CD4-positive, alpha-beta T cell (primary cell): ENCODE measurements at regions of chr19 and their contacts with region 1.

Region 1: GRCh38 chr19:41859618-41860418 is at the start of gene RPS19:
- DNase-seq: peak; percentile 95 to 99 (median 98)
- ATAC-seq: peak; percentile 85
- H3K4me3 ChIP-seq: peak within 1 kb of the TSS; percentile 74
- H3K4me3 Mint-ChIP-seq: peak within 1 kb of the TSS; percentile 87
- H3K27ac ChIP-seq: peak within 1 kb of the TSS; percentile 89 to 98
- H3K27ac Mint-ChIP-seq: peak within 1 kb of the TSS; percentile 86
- H3K4me1 ChIP-seq: peaks cover 49% of the 10 kb centered on the region
- H3K4me1 Mint-ChIP-seq: peaks cover 48% of the 10 kb centered on the region
- H3K27me3 ChIP-seq: no peaks in the 10 kb centered on the region
- H3K27me3 Mint-ChIP-seq: no peaks in the 10 kb centered on the region
- CTCF ChIP-seq: peak; percentile 84
- total RNA-seq, gene RPS19: 3,668 to 3,697 TPM

Region 2: DNA sequence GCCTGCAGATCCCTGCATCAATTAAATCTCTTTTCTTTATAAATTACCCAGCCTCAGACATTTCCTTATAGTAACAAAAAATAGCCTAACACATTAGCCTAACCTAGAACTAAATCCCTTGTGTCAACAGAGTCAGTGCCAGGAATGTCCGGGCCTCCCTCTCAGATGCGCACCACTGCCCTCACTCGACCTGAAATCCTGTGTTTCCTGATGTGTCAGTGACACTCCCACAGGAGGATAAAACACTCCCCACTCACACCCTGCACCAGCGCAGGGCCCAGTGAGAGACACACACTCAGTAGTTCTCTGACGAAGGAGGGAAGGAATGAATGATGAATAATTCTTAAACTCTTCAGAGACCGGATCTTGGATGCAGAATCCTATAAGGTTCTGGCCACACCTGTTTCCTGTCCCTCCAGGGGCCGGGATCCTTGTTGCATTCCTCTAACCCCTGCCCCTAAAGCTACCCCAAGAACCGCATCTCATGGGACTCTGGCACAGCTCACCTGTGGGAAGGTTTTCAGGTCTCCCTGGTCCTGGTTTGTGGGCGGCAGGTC is 60.3 kb before region 1 on chr19:
- CTCF ChIA-PET with region 1: no interaction called
- POLR2A ChIA-PET with region 1: no interaction called
- intact Hi-C with region 1: no loop called
- DNase-seq: no peak
- ATAC-seq: no peak
- H3K4me3 ChIP-seq: no peak overlapping the region
- H3K4me3 Mint-ChIP-seq: no peak overlapping the region
- H3K27ac ChIP-seq: no peak overlapping the region
- H3K27ac Mint-ChIP-seq: no peak overlapping the region
- H3K4me1 ChIP-seq: no peaks in the 10 kb centered on the region
- H3K4me1 Mint-ChIP-seq: peaks cover 14% of the 10 kb centered on the region
- H3K27me3 ChIP-seq: peaks cover 0 to 7% of the 10 kb centered on the region in 2 experiments
- H3K27me3 Mint-ChIP-seq: peaks cover 6% of the 10 kb centered on the region
- CTCF ChIP-seq: no peak

Region 3: DNA sequence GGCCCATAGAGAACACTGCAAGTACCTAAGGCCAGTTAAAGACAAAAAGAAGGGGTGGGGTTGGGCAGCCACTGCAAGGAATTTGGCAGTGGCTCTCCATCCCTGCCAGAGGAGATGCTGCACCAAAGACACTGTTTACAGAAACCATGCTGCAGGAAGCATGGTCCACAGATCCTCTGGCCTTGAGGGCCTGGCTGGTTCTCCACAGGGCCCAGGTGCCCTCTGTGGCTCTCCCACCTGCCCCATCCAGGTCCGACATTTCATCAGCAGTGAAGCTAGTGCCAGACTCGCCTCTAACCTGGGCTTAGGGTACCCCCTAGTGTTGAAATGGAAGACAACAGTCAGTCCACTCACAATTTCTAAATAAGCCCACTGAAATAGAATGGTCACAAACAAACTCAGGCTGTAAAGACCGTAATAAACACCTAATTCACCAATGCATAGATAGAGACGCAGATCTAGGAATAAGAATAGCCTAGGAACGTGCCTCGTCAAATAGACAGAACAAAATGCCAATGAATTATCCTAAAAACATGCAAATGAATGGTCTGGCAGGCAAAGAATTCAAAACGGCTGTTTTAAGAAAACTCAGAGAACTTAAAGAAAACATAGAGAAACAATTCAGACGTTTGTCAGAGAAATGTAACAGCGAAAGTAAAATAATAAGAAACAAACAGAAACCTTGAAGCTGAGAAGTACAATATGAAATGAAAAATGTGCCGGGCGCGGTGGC is 38.6 kb before region 1 on chr19:
- CTCF ChIA-PET with region 1: no interaction called
- POLR2A ChIA-PET with region 1: no interaction called
- intact Hi-C with region 1: no loop called
- DNase-seq: peak in 13 of 14 experiments; percentile 7 to 76 (median 21)
- ATAC-seq: peak; percentile 81
- H3K4me3 ChIP-seq: no peak overlapping the region
- H3K4me3 Mint-ChIP-seq: no peak overlapping the region
- H3K27ac ChIP-seq: no peak overlapping the region
- H3K27ac Mint-ChIP-seq: no peak overlapping the region
- H3K4me1 ChIP-seq: peaks cover 2% of the 10 kb centered on the region
- H3K4me1 Mint-ChIP-seq: no peaks in the 10 kb centered on the region
- H3K27me3 ChIP-seq: peaks cover 0 to 2% of the 10 kb centered on the region in 2 experiments
- H3K27me3 Mint-ChIP-seq: peaks cover 25% of the 10 kb centered on the region
- CTCF ChIP-seq: peak; percentile 66

Region 4: GRCh38 chr19:41872775-41873647 is 13.2 kb after region 1 on chr19:
- CTCF ChIA-PET with region 1: interaction called, 50 read pairs
- POLR2A ChIA-PET with region 1: interaction called, 125 read pairs
- intact Hi-C with region 1: loop called (anchors 1 kb)
- DNase-seq: peak; percentile 55 to 82 (median 66)
- ATAC-seq: no peak
- H3K4me3 ChIP-seq: no peak overlapping the region
- H3K4me3 Mint-ChIP-seq: peak overlapping the region; percentile 71
- H3K27ac ChIP-seq: peak overlapping the region; percentile 66 to 67
- H3K27ac Mint-ChIP-seq: peak overlapping the region; percentile 98
- H3K4me1 ChIP-seq: peaks cover 100% of the 10 kb centered on the region
- H3K4me1 Mint-ChIP-seq: peaks cover 80% of the 10 kb centered on the region
- H3K27me3 ChIP-seq: no peaks in the 10 kb centered on the region
- H3K27me3 Mint-ChIP-seq: no peaks in the 10 kb centered on the region
- CTCF ChIP-seq: peak; percentile 86

Region 5: GRCh38 chr19:41892173-41892902 is 32.5 kb after region 1 on chr19:
- CTCF ChIA-PET with region 1: interaction called, 59 read pairs
- POLR2A ChIA-PET with region 1: interaction called, 184 read pairs
- intact Hi-C with region 1: loop called (anchors 1 kb)
- DNase-seq: no peak
- ATAC-seq: no peak
- H3K4me3 ChIP-seq: no peak overlapping the region
- H3K4me3 Mint-ChIP-seq: no peak overlapping the region
- H3K27ac ChIP-seq: peak overlapping the region; percentile 52 to 57
- H3K27ac Mint-ChIP-seq: peak overlapping the region; percentile 98
- H3K4me1 ChIP-seq: peaks cover 94% of the 10 kb centered on the region
- H3K4me1 Mint-ChIP-seq: peaks cover 60% of the 10 kb centered on the region
- H3K27me3 ChIP-seq: no peaks in the 10 kb centered on the region
- H3K27me3 Mint-ChIP-seq: no peaks in the 10 kb centered on the region
- CTCF ChIP-seq: no peak

Region 6: GRCh38 chr19:41934849-41935374 is 75.1 kb after region 1 on chr19:
- CTCF ChIA-PET with region 1: interaction called, 9 read pairs
- POLR2A ChIA-PET with region 1: interaction called, 7 read pairs
- intact Hi-C with region 1: loop called in 1 of 2 experiments (anchors 1 kb)
- DNase-seq: peak; percentile 65 to 88 (median 74)
- ATAC-seq: peak; percentile 63
- H3K4me3 ChIP-seq: no peak overlapping the region
- H3K4me3 Mint-ChIP-seq: peak overlapping the region; percentile 40
- H3K27ac ChIP-seq: no peak overlapping the region
- H3K27ac Mint-ChIP-seq: peak overlapping the region; percentile 73
- H3K4me1 ChIP-seq: peaks cover 49% of the 10 kb centered on the region
- H3K4me1 Mint-ChIP-seq: peaks cover 56% of the 10 kb centered on the region
- H3K27me3 ChIP-seq: no peaks in the 10 kb centered on the region
- H3K27me3 Mint-ChIP-seq: no peaks in the 10 kb centered on the region
- CTCF ChIP-seq: peak; percentile 96

Region 7: DNA sequence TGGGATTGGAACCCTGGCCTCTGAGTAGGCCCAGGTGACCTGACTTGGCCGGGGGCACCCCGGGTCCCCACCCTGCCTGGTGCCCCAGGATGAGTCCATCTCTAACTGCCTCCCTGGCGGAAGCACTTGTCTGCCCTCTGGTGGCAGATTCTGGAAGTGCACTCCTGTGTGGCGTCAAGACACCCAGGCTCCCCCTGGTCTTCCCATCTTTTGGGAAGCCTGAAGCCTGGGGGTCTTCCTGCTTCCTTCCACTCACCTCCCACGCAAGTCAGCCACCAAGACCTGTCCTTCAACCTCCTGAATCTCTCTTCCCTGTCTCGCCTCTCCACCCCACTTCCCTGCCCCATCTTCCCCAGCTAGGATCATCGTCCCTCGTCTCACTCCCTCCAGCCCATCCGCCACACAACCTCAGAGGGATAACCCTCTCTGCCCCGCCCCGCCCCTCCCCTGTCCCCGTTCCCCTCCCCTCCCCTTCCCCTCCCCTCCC is 91.9 kb after region 1 on chr19:
- CTCF ChIA-PET with region 1: interaction called, 17 read pairs
- POLR2A ChIA-PET with region 1: interaction called, 19 read pairs
- intact Hi-C with region 1: loop called (anchors 1 kb)
- DNase-seq: peak; percentile 76 to 95 (median 88)
- ATAC-seq: peak; percentile 95
- H3K4me3 ChIP-seq: no peak overlapping the region
- H3K4me3 Mint-ChIP-seq: peak overlapping the region; percentile 61
- H3K27ac ChIP-seq: no peak overlapping the region
- H3K27ac Mint-ChIP-seq: peak overlapping the region; percentile 48
- H3K4me1 ChIP-seq: peaks cover 15% of the 10 kb centered on the region
- H3K4me1 Mint-ChIP-seq: peaks cover 20% of the 10 kb centered on the region
- H3K27me3 ChIP-seq: no peaks in the 10 kb centered on the region
- H3K27me3 Mint-ChIP-seq: no peaks in the 10 kb centered on the region
- CTCF ChIP-seq: peak; percentile 99

Region 8: DNA sequence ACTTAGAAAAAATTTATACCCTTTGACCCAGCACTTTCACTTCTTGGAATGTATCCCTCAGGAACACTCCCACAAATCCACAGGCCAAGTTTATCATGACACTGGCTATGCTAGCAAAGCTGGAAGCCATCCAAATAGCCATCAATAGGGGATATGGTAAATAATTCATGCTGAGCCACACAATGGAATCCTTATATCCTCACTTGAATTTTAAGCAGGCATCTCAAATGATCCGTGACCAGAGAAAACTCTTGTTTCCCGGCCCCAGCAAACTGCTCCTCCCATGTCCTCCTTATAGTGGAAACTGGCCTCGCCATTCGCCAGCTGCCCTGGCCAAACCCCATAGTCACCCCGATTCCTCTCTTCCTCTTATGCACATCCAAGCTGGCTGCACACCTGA is 172.6 kb after region 1 on chr19:
- CTCF ChIA-PET with region 1: interaction called, 5 read pairs
- POLR2A ChIA-PET with region 1: interaction called, 3 read pairs
- intact Hi-C with region 1: loop called in 1 of 2 experiments (anchors 5 kb)
- DNase-seq: no peak
- ATAC-seq: no peak
- H3K4me3 ChIP-seq: no peak overlapping the region
- H3K4me3 Mint-ChIP-seq: no peak overlapping the region
- H3K27ac ChIP-seq: no peak overlapping the region
- H3K27ac Mint-ChIP-seq: no peak overlapping the region
- H3K4me1 ChIP-seq: peaks cover 6% of the 10 kb centered on the region
- H3K4me1 Mint-ChIP-seq: no peaks in the 10 kb centered on the region
- H3K27me3 ChIP-seq: no peaks in the 10 kb centered on the region
- H3K27me3 Mint-ChIP-seq: peaks cover 18% of the 10 kb centered on the region
- CTCF ChIP-seq: no peak

Region 9: DNA sequence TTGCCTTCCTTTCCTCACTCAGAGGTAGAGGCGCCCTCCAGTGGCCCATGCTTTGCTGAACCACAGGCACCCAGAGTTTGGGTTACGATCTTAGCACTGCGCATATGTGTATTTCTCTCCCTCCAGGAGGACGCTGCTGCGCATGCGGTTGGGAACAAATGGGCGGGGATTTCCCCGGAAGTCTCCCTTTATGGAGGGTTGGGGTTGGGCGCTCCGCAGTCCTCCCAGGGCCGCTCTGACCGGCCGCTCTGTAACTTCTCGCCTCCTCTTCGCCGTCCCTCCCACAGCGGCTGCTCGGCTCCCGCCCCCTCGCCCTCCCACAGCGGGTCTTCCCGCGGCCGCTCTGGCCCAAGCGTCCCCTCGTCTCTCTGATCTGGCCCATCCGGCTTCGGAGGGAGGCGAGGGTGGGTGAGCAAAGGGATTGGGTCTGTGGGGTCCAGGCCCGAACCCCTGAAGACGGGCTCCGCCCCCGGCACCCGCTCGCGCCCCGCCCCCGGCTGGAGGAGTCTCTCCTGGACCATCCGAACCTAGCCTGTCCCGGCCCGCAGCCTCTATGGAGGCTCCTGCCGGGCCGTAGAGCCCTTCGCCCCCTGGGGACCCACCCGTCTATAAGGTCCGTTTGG is 465.6 kb after region 1 on chr19 and contains the start of gene MEGF8:
- CTCF ChIA-PET with region 1: no interaction called
- POLR2A ChIA-PET with region 1: no interaction called
- intact Hi-C with region 1: loop called in 1 of 2 experiments (anchors 5 kb)
- DNase-seq: peak; percentile 97 to 99 (median 98)
- ATAC-seq: peak; percentile 95
- H3K4me3 ChIP-seq: peak within 1 kb of the TSS; percentile 84
- H3K4me3 Mint-ChIP-seq: peak within 1 kb of the TSS; percentile 94
- H3K27ac ChIP-seq: peak within 1 kb of the TSS; percentile 46 to 55
- H3K27ac Mint-ChIP-seq: peak within 1 kb of the TSS; percentile 50
- H3K4me1 ChIP-seq: peaks cover 26% of the 10 kb centered on the region
- H3K4me1 Mint-ChIP-seq: peaks cover 25% of the 10 kb centered on the region
- H3K27me3 ChIP-seq: peaks cover 16 to 21% of the 10 kb centered on the region in 2 experiments
- H3K27me3 Mint-ChIP-seq: peaks cover 25% of the 10 kb centered on the region
- CTCF ChIP-seq: peak; percentile 90
- total RNA-seq, gene MEGF8: 4.1 to 4.2 TPM